A549 (cell line): ENCODE measurements at regions of chr12 and their contacts with region 1.

Region 1: GRCh38 chr12:46268590-46269558 is at the start of gene SLC38A1:
- DNase-seq: peak; percentile 88 to 93
- ATAC-seq: peak; percentile 87 to 89
- H3K4me3 ChIP-seq: peak within 1 kb of the TSS; percentile 66
- H3K27ac ChIP-seq: peak within 1 kb of the TSS; percentile 94 to 95
- H3K4me1 ChIP-seq: peaks cover 36% of the 10 kb centered on the region
- CTCF ChIP-seq: no peak
- EP300 ChIP-seq: no peak
- POLR2A ChIP-seq: peak; percentile 42
- RAD21 ChIP-seq: peak in 1 of 2 experiments; percentile 42; a peak in 1 of 5 replicates
- polyA plus RNA-seq, gene SLC38A1: 183 and 231 TPM in 2 replicates

Region 2: GRCh38 chr12:46357438-46358324 is 88.8 kb after region 1 on chr12:
- CTCF ChIA-PET with region 1: interaction called, 4 read pairs
- POLR2A ChIA-PET with region 1: interaction called, 18 read pairs
- DNase-seq: peak in 1 of 2 experiments; percentile 72
- ATAC-seq: peak; percentile 60 to 63
- H3K4me3 ChIP-seq: no peak overlapping the region
- H3K27ac ChIP-seq: 0 out of 6 replicates have a peak overlapping the region, but pooled peaks of 1 of the 2 experiments have one; percentile 20
- H3K4me1 ChIP-seq: peaks cover 43% of the 10 kb centered on the region
- CTCF ChIP-seq: no peak
- EP300 ChIP-seq: no peak
- POLR2A ChIP-seq: no peak
- RAD21 ChIP-seq: no peak

Region 3: DNA sequence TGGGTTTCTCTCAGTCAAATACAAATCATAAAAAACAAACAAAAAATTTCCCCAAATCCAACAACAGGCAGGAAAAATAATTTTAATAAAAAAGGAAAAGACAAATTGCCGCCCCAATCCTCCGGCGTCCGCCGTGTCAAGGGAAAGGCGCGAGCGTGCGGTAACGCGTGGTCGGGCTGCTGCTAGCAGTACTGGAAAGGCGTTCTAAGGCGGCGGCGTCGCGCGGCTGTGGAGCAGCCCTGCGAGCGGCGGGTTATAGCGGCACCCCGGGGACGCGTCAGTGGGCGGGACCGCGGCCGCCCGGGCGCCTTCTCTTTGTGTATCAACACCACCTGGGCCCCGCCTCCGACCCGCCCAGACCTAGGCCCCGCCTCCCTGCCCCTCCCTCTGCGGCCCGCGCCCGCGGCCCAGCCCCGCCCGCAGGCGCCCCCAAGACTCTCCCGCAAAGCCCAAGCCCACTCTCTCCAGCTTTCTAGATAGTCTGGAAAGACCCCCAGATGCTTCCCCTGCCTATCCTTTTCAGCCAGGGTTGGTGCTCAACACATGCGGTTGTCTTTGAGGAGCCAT is 103.8 kb after region 1 on chr12 and contains the start of gene SLC38A2:
- CTCF ChIA-PET with region 1: no interaction called
- POLR2A ChIA-PET with region 1: interaction called, 16 read pairs
- DNase-seq: peak; percentile 87 to 94
- ATAC-seq: peak; percentile 81 to 88
- H3K4me3 ChIP-seq: peak within 1 kb of the TSS; percentile 91
- H3K27ac ChIP-seq: peak within 1 kb of the TSS; percentile 99 to 100
- H3K4me1 ChIP-seq: peaks cover 30% of the 10 kb centered on the region
- CTCF ChIP-seq: no peak
- EP300 ChIP-seq: no peak
- POLR2A ChIP-seq: peak; percentile 99
- RAD21 ChIP-seq: peak in 1 of 2 experiments; percentile 1; a peak in 3 of 5 replicates
- polyA plus RNA-seq, gene SLC38A2: 366 and 519 TPM in 2 replicates